ENCODE measurements at regions of chr6 and their contacts with region 1.

Region 1: GRCh38 chr6:97186416-97186999 is 96.5 kb downstream of the MMS22L start:
- DNase-seq: peak; percentile 84
- H3K4me3 ChIP-seq: no peak overlapping the region
- H3K27ac ChIP-seq: no peak overlapping the region
- H3K4me1 ChIP-seq: no peaks in the 10 kb centered on the region
- H3K27me3 ChIP-seq: no peaks in the 10 kb centered on the region
- CTCF ChIP-seq: peak; percentile 63 to 80 (median 66)
- POLR2A ChIP-seq: no peak

Region 2: DNA sequence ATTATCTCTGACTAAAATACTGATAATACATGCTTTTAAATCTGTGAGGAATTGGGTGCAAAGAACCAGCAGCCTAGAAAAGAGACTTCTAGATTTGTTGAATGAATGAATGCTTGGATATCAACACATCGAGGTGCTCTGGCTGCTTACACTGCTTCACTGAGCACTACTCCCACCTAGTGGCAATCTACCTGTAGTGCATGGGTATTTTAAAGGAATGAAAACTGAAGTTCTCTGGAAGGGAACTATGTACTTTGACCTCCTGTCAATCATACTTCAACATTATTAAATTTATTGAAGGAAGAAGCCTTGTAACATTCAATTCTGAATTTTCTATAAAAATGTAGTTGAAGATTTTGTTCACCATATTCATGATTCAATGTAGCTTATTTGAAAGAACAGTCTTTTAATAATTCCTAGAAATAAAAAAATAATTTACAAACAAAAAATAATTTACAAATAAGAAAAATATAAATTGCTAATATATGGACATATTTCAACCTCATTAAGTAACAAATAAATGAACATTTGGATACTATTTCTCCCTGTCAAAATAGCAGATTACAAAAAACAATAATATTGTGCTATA is 207.7 kb after region 1 on chr6:
- intact Hi-C with region 1: loop called (anchors 10 kb)
- DNase-seq: peak; percentile 70
- H3K4me3 ChIP-seq: no peak overlapping the region
- H3K27ac ChIP-seq: no peak overlapping the region
- H3K4me1 ChIP-seq: no peaks in the 10 kb centered on the region
- H3K27me3 ChIP-seq: no peaks in the 10 kb centered on the region
- CTCF ChIP-seq: peak; percentile 68 to 91 (median 80)
- POLR2A ChIP-seq: no peak

Region 3: DNA sequence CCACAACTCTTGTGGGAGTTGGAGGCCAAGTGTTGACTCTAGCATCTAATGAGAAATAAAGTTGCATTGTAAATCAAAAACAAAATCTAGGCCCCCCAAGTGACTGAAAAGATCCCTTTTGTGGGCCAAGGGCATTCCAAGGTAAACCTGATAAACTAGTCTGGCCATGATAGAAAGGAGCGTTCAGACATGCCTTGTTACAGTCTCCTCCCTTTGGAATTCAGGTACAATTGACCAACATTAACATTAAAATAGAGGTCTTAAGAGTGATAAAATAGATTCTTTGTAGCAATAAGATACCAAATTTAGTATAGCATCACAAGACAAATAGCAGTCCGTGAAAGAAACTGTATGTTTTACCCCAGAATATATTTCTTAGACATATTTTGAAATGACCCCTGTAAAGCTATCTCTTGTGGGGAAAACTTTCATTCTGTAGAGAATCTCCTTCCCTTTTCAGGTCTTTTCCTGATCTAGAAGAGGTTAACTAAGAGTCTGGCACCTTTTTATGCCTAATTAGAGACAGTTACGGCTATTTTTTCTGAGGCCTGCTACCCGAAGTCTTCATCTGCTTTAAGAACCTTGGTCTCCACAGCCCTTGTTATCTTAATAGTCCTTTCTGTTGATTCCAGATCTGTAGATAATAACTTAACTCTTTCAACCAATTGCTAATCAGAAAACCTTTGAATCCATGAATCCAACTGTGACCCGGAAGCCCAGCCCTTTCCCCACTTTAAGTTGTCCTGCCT is 592.0 kb after region 1 on chr6:
- intact Hi-C with region 1: no loop called
- DNase-seq: no peak
- H3K4me3 ChIP-seq: no peak overlapping the region
- H3K27ac ChIP-seq: no peak overlapping the region
- H3K4me1 ChIP-seq: no peaks in the 10 kb centered on the region
- H3K27me3 ChIP-seq: no peaks in the 10 kb centered on the region
- CTCF ChIP-seq: no peak
- POLR2A ChIP-seq: no peak

Region 4: GRCh38 chr6:98648211-98648914 is 1461.9 kb after region 1 on chr6:
- intact Hi-C with region 1: no loop called
- DNase-seq: no peak
- H3K4me3 ChIP-seq: no peak overlapping the region
- H3K27ac ChIP-seq: no peak overlapping the region
- H3K4me1 ChIP-seq: no peaks in the 10 kb centered on the region
- H3K27me3 ChIP-seq: no peaks in the 10 kb centered on the region
- CTCF ChIP-seq: no peak
- POLR2A ChIP-seq: no peak

Measured in testis (tissue), 5 donors.